Psoas muscle (tissue), 8 donors: ENCODE measurements at regions of chr2 and their contacts with region 1.

Region 1: DNA sequence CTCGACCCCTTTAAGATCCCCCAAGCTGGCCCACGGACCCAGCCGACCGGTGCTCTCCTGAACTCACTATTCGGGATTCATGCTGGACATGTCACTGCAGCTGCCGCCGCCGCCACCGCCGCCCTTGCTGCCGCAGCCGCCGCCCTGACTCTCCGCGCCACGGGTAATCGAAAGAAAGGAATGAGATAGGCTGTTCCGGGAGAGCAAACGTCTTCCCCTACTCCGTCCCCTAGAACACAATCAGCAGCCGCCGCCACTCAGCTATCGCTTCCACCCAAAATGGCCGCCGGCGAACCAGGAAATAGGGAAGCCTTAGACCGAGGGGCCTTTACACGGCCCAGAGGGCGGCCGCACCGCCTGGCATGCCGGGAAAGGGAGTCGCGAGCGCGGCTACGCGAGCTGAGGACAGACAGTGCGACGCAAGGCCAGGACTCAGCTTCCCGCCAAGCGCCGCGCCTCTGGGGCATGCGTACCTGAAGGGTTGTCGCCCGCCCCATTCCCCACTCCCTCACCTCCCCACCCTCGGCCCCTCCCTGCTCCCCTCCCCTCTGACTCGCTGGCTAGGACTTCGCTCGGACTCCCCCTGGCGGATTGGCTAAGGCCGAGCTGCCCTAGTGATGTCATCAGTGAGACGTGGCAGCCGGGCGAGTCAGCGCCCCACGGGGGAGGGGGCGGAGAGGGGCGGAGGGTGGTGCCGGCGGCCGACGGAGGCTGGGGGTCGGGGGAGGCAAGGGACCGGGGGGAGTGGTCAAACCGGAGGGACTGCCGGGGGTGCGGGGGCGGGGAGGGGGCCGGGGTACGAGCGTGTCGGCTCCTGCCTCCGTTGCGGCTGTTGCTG is at the start of gene RAB1A:
- DNase-seq: peak; percentile 100
- ATAC-seq: peak; percentile 90 to 97 (median 94)
- H3K4me3 ChIP-seq: peak within 1 kb of the TSS; percentile 95
- H3K27ac ChIP-seq: peak within 1 kb of the TSS; percentile 98
- H3K4me1 ChIP-seq: peaks cover 41% of the 10 kb centered on the region
- H3K27me3 ChIP-seq: no peaks in the 10 kb centered on the region
- CTCF ChIP-seq: peak; percentile 28
- total RNA-seq, gene RAB1A: 52.0 to 94.2 (median 85.8) TPM

Region 2: DNA sequence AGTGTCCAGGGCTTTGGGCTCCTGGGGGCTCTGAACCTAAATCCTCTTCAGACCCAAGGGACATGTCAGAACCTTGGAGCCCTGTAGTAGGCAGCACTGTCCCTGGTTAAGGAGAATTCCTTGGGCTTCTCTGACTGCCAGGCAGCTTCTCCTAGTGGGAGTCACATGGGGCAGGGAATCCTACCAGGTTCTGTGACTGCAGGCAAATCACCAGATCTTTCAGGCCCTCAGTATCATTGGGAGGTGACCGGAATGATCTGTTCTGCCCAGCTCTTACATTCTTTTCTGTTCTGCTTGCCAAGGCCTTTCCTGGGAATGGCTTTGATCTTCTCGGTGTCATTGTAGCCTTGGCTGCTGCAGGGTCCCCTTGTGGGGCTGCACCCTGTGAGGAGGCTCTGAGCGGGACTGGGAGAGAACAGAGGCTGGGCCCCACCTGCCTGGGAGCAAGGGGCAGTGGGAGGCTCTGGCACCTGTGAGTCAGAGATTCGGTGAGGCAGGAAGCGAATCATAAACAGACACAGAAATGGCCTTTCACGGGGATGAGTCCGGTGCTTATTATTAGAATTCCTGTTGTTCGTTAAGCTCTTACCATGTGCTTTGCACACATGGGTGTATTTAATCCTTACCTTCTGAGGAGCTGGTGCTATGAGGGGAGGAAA is 59.7 kb before region 1 on chr2:
- intact Hi-C with region 1: loop called (anchors 5 kb)
- DNase-seq: no peak
- ATAC-seq: peak; percentile 60 to 74 (median 70)
- H3K4me3 ChIP-seq: peak overlapping the region; percentile 1
- H3K27ac ChIP-seq: peak overlapping the region; percentile 94
- H3K4me1 ChIP-seq: peaks cover 85% of the 10 kb centered on the region
- H3K27me3 ChIP-seq: no peaks in the 10 kb centered on the region
- CTCF ChIP-seq: peak; percentile 36

Region 3: DNA sequence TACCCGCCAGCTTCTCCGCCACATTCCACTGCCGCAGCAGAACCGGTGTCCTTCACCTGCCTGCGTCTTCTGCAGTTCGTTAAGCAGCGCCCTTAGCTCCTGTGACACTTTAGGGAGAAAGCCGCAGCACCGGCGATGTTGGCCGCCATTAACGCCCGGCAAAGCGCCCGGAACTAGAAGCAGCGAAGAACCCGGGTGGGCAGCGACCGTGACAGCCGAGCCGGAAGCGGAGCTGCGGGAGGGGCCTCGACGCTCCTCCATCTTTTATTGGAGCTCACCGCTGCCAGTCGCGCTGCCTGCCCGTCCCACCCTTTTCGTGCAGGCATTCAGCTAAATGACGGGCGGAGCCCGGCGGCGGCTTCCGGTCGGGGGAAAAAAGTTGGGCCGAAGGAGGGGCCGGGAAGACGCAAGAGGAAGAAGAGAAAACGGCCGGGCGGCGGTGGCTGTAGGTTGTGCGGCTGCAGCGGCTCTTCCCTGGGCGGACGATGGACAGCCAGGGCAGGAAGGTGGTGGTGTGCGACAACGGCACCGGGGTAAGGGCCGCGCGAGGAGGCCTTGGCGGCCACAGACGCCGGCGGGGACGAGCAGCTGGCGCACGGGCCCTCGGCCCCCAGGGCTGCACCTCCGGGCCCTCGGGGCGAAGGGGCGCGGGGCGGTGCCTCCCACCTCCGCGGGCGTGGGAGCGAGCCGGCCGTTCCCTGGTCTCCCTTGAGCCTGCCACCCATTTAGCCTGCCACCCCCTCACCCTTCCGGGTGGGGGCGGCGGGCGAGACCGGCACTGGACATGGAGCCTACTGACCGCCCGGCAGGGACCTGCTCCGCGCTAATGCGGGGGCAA is 97.6 kb after region 1 on chr2 and contains the start of gene ACTR2:
- intact Hi-C with region 1: loop called in 1 of 2 experiments (anchors 1 kb)
- DNase-seq: peak; percentile 96 to 98
- ATAC-seq: peak; percentile 97 to 98 (median 98)
- H3K4me3 ChIP-seq: peak within 1 kb of the TSS; percentile 99
- H3K27ac ChIP-seq: peak within 1 kb of the TSS; percentile 100
- H3K4me1 ChIP-seq: peaks cover 35% of the 10 kb centered on the region
- H3K27me3 ChIP-seq: no peaks in the 10 kb centered on the region
- CTCF ChIP-seq: no peak
- total RNA-seq, gene ACTR2: 72.0 to 99.0 (median 88.8) TPM